ENCODE measurements at regions of chrX and their contacts with region 1.

Region 1: GRCh38 chrX:140733769-140734342 is 24.3 kb downstream of the LINC00632 start:
- DNase-seq: no peak
- ATAC-seq: peak; percentile 87
- H3K4me3 ChIP-seq: no peak overlapping the region
- H3K27ac ChIP-seq: no peak overlapping the region
- H3K4me1 ChIP-seq: no peaks in the 10 kb centered on the region
- H3K27me3 ChIP-seq: no peaks in the 10 kb centered on the region
- CTCF ChIP-seq: peak; percentile 78 to 84 (median 78)
- EP300 ChIP-seq: no peak
- POLR2A ChIP-seq: no peak
- RAD21 ChIP-seq: peak; percentile 73

Region 2: GRCh38 chrX:140057001-140057411 is 676.9 kb before region 1 on chrX:
- CTCF ChIA-PET with region 1: no interaction called
- POLR2A ChIA-PET with region 1: no interaction called
- RAD21 ChIA-PET with region 1: no interaction called
- SMC1A ChIA-PET with region 1: no interaction called
- in situ Hi-C with region 1: loop called (anchors 10 kb)
- intact Hi-C with region 1: loop called (anchors 1 kb)
- DNase-seq: peak; percentile 5
- ATAC-seq: peak; percentile 99
- H3K4me3 ChIP-seq: no peak overlapping the region
- H3K27ac ChIP-seq: no peak overlapping the region
- H3K4me1 ChIP-seq: no peaks in the 10 kb centered on the region
- H3K27me3 ChIP-seq: no peaks in the 10 kb centered on the region
- CTCF ChIP-seq: peak; percentile 81 to 93 (median 90)
- EP300 ChIP-seq: no peak
- POLR2A ChIP-seq: no peak
- RAD21 ChIP-seq: peak; percentile 71

Region 3: DNA sequence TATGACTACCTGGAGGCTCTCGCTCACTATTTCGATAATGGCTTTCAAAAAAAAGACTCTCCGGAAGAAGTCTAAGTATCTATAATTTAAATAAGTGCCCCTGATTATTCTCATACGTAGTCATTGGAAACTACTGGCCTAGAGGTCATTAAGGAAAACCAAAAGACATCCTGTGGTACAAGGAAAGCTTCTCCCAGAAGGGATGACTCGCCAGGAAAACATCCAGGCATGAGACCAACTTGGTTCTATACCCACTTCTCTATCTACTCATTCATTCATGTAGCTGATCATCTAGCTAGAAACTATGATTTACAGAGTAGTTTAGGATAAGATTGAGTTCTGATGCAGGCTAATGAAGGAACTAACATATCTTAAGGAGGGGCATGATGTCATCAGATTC is 266.6 kb before region 1 on chrX:
- CTCF ChIA-PET with region 1: no interaction called
- POLR2A ChIA-PET with region 1: no interaction called
- RAD21 ChIA-PET with region 1: no interaction called
- SMC1A ChIA-PET with region 1: no interaction called
- in situ Hi-C with region 1: no loop called
- intact Hi-C with region 1: no loop called
- DNase-seq: no peak
- ATAC-seq: no peak
- H3K4me3 ChIP-seq: no peak overlapping the region
- H3K27ac ChIP-seq: no peak overlapping the region
- H3K4me1 ChIP-seq: no peaks in the 10 kb centered on the region
- H3K27me3 ChIP-seq: no peaks in the 10 kb centered on the region
- CTCF ChIP-seq: no peak
- EP300 ChIP-seq: no peak
- POLR2A ChIP-seq: no peak
- RAD21 ChIP-seq: no peak

Region 4: DNA sequence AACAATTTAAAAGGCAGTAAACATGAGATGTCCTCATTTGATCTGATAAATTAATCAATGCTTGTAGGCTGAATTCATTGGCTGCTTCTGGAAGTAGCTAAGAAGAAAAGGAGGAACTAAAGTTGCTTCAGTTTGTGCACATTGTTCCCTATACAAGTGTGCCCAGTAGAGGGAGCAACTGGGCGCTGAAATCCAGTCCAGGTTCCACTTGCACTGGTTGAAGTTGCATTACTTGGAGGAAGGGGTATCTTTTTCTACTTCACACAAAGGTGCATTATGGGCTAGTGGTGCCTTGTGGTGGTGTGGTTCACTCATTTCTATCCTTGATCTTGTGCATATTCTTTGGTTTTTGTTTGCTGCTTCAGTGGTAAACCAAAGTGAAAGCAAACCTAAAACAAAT is 161.1 kb before region 1 on chrX:
- CTCF ChIA-PET with region 1: interaction called, 3 read pairs
- POLR2A ChIA-PET with region 1: no interaction called
- RAD21 ChIA-PET with region 1: no interaction called
- SMC1A ChIA-PET with region 1: no interaction called
- in situ Hi-C with region 1: no loop called
- intact Hi-C with region 1: loop called (anchors 1 kb)
- DNase-seq: peak; percentile 3
- ATAC-seq: peak; percentile 93
- H3K4me3 ChIP-seq: no peak overlapping the region
- H3K27ac ChIP-seq: no peak overlapping the region
- H3K4me1 ChIP-seq: no peaks in the 10 kb centered on the region
- H3K27me3 ChIP-seq: no peaks in the 10 kb centered on the region
- CTCF ChIP-seq: peak; percentile 66 to 80 (median 72)
- EP300 ChIP-seq: no peak
- POLR2A ChIP-seq: no peak
- RAD21 ChIP-seq: peak; percentile 40

Region 5: DNA sequence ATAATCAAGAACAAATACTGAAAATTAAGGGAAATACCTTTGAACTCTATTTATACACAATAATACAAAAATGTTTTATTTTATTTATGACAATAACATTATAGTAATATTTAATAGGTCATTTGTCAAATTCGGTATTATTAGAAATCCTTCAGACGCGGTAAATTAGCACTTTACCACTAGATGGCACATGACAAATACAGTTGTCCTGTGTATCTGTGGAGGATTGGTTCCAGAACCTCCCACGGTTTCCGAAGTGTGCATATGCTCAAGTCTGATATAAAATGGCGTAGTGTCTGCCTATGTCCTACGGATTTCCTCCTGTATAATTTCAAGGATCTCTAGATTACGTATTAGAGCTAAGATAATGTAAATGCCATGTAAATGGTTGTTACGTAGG is 32.4 kb before region 1 on chrX:
- CTCF ChIA-PET with region 1: no interaction called
- POLR2A ChIA-PET with region 1: no interaction called
- RAD21 ChIA-PET with region 1: no interaction called
- SMC1A ChIA-PET with region 1: no interaction called
- in situ Hi-C with region 1: no loop called
- intact Hi-C with region 1: loop called (anchors 1 kb)
- DNase-seq: no peak
- ATAC-seq: peak; percentile 61; the same call in 2 of the 3 replicates
- H3K4me3 ChIP-seq: no peak overlapping the region
- H3K27ac ChIP-seq: no peak overlapping the region
- H3K4me1 ChIP-seq: no peaks in the 10 kb centered on the region
- H3K27me3 ChIP-seq: no peaks in the 10 kb centered on the region
- CTCF ChIP-seq: peak; percentile 28 to 43 (median 37); a peak in 4 of 6 replicates
- EP300 ChIP-seq: no peak
- POLR2A ChIP-seq: no peak
- RAD21 ChIP-seq: no peak; the same call in 1 of the 2 replicates

Measured in GM12878 (cell line).